CD8-positive, alpha-beta T cell (primary cell): ENCODE measurements at regions of chr3 and their contacts with region 1.

Region 1: GRCh38 chr3:151227807-151228665 is 25.0 kb upstream of the GPR171 start:
- DNase-seq: peak; percentile 61 to 88 (median 79)
- ATAC-seq: peak; percentile 83
- H3K4me3 ChIP-seq: no peak overlapping the region
- H3K4me3 Mint-ChIP-seq: no peak overlapping the region
- H3K27ac ChIP-seq: no peak overlapping the region
- H3K27ac Mint-ChIP-seq: peak overlapping the region; percentile 4
- H3K4me1 ChIP-seq: peaks cover 16% of the 10 kb centered on the region
- H3K4me1 Mint-ChIP-seq: peaks cover 48% of the 10 kb centered on the region
- H3K27me3 ChIP-seq: no peaks in the 10 kb centered on the region
- H3K27me3 Mint-ChIP-seq: no peaks in the 10 kb centered on the region
- CTCF ChIP-seq: peak; percentile 92

Region 2: GRCh38 chr3:151183265-151183671 is 44.8 kb before region 1 on chr3:
- CTCF ChIA-PET with region 1: interaction called, 4 read pairs
- POLR2A ChIA-PET with region 1: no interaction called
- intact Hi-C with region 1: loop called in 1 of 2 experiments (anchors 2 kb)
- DNase-seq: peak in 2 of 9 experiments; percentile 25 to 47
- ATAC-seq: peak; percentile 76
- H3K4me3 ChIP-seq: peak overlapping the region in 1 of 2 experiments; percentile 0
- H3K4me3 Mint-ChIP-seq: peak overlapping the region; percentile 68
- H3K27ac ChIP-seq: peak overlapping the region in 1 of 2 experiments; percentile 2
- H3K27ac Mint-ChIP-seq: peak overlapping the region; percentile 77
- H3K4me1 ChIP-seq: peaks cover 14% of the 10 kb centered on the region
- H3K4me1 Mint-ChIP-seq: peaks cover 39% of the 10 kb centered on the region
- H3K27me3 ChIP-seq: no peaks in the 10 kb centered on the region
- H3K27me3 Mint-ChIP-seq: no peaks in the 10 kb centered on the region
- CTCF ChIP-seq: no peak

Region 3: GRCh38 chr3:151216641-151217607 is 11.1 kb before region 1 on chr3:
- CTCF ChIA-PET with region 1: interaction called, 24 read pairs
- POLR2A ChIA-PET with region 1: no interaction called
- intact Hi-C with region 1: no loop called
- DNase-seq: no peak
- ATAC-seq: no peak
- H3K4me3 ChIP-seq: no peak overlapping the region
- H3K4me3 Mint-ChIP-seq: no peak overlapping the region
- H3K27ac ChIP-seq: no peak overlapping the region
- H3K27ac Mint-ChIP-seq: no peak overlapping the region
- H3K4me1 ChIP-seq: no peaks in the 10 kb centered on the region
- H3K4me1 Mint-ChIP-seq: no peaks in the 10 kb centered on the region
- H3K27me3 ChIP-seq: no peaks in the 10 kb centered on the region
- H3K27me3 Mint-ChIP-seq: no peaks in the 10 kb centered on the region
- CTCF ChIP-seq: no peak

Region 4: DNA sequence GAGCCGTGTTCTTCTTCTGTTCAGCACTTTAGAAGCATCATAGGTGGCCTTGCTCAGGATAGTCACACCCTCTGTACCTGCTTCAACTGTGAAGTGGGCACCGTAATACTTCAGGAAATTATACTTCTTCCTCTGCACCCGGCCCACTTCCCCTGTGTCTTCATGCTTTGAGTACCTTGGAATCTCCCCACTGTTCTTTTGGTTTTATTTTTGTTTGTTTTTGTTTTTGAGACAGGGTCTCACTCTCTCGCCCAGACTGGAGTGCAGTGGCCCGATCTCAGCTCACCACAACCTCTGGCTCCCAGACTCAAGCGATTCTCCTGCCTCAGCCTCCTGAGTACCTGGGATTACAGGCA is 48.6 kb after region 1 on chr3:
- CTCF ChIA-PET with region 1: interaction called, 226 read pairs
- POLR2A ChIA-PET with region 1: interaction called, 5 read pairs
- intact Hi-C with region 1: loop called in 1 of 2 experiments (anchors 1 kb)
- DNase-seq: peak in 6 of 9 experiments; percentile 14 to 74 (median 52)
- ATAC-seq: peak; percentile 88
- H3K4me3 ChIP-seq: no peak overlapping the region
- H3K4me3 Mint-ChIP-seq: peak overlapping the region; percentile 62
- H3K27ac ChIP-seq: peak overlapping the region in 1 of 2 experiments; percentile 37
- H3K27ac Mint-ChIP-seq: peak overlapping the region; percentile 97
- H3K4me1 ChIP-seq: peaks cover 30% of the 10 kb centered on the region
- H3K4me1 Mint-ChIP-seq: peaks cover 48% of the 10 kb centered on the region
- H3K27me3 ChIP-seq: no peaks in the 10 kb centered on the region
- H3K27me3 Mint-ChIP-seq: no peaks in the 10 kb centered on the region
- CTCF ChIP-seq: no peak

Region 5: DNA sequence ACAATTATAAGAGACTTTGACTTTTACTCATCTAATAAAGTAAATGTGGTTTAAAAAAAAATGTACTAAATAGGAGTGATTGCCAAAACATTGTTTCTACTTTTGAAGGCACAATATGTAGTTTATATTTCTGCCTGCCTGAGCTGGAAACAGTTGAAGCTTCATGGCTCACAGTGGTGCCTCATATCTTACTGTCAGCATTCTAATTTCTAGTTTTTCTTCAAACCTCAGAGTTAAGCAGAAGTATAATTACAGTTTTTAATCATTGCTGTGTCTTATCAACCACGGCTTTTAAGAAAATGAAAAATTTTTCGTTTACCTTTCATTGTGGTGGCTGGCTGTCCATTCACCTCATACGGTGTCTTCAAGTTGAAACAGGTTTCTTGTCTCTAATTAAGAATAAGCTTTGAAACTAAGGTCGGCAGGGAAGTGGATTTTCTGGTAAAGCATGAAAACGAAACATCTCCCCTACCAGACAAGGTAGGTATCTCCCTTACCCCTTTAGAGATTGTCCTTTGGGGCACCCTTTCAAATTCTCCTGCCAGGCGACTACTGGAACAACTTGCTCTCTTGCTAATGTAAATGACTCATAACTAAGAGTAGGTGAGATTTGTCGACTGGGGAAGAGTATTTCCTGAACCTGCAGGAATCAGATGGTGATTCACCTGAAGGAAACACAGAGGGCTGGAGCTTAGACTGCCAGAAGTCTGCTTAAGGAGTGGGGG is 88.4 kb after region 1 on chr3 and contains the start of gene GPR87:
- CTCF ChIA-PET with region 1: no interaction called
- POLR2A ChIA-PET with region 1: no interaction called
- intact Hi-C with region 1: no loop called
- DNase-seq: no peak
- ATAC-seq: no peak
- H3K4me3 ChIP-seq: no peak within 1 kb of the TSS
- H3K4me3 Mint-ChIP-seq: no peak within 1 kb of the TSS
- H3K27ac ChIP-seq: no peak within 1 kb of the TSS
- H3K27ac Mint-ChIP-seq: no peak within 1 kb of the TSS
- H3K4me1 ChIP-seq: no peaks in the 10 kb centered on the region
- H3K4me1 Mint-ChIP-seq: no peaks in the 10 kb centered on the region
- H3K27me3 ChIP-seq: no peaks in the 10 kb centered on the region
- H3K27me3 Mint-ChIP-seq: no peaks in the 10 kb centered on the region
- CTCF ChIP-seq: no peak
- total RNA-seq, gene GPR87: not detected

Region 6: GRCh38 chr3:151439652-151440129 is 211.7 kb after region 1 on chr3:
- CTCF ChIA-PET with region 1: no interaction called
- POLR2A ChIA-PET with region 1: no interaction called
- intact Hi-C with region 1: loop called in 1 of 2 experiments (anchors 5 kb)
- DNase-seq: peak in 2 of 9 experiments; percentile 43 to 52
- ATAC-seq: no peak
- H3K4me3 ChIP-seq: no peak overlapping the region
- H3K4me3 Mint-ChIP-seq: no peak overlapping the region
- H3K27ac ChIP-seq: no peak overlapping the region
- H3K27ac Mint-ChIP-seq: no peak overlapping the region
- H3K4me1 ChIP-seq: no peaks in the 10 kb centered on the region
- H3K4me1 Mint-ChIP-seq: no peaks in the 10 kb centered on the region
- H3K27me3 ChIP-seq: peaks cover 0 to 4% of the 10 kb centered on the region in 2 experiments
- H3K27me3 Mint-ChIP-seq: peaks cover 5% of the 10 kb centered on the region
- CTCF ChIP-seq: peak; percentile 62

Region 7: GRCh38 chr3:151770956-151771355 is 542.9 kb after region 1 on chr3:
- CTCF ChIA-PET with region 1: no interaction called
- POLR2A ChIA-PET with region 1: no interaction called
- intact Hi-C with region 1: no loop called
- DNase-seq: no peak
- ATAC-seq: no peak
- H3K4me3 ChIP-seq: no peak overlapping the region
- H3K4me3 Mint-ChIP-seq: no peak overlapping the region
- H3K27ac ChIP-seq: no peak overlapping the region
- H3K27ac Mint-ChIP-seq: no peak overlapping the region
- H3K4me1 ChIP-seq: no peaks in the 10 kb centered on the region
- H3K4me1 Mint-ChIP-seq: no peaks in the 10 kb centered on the region
- H3K27me3 ChIP-seq: no peaks in the 10 kb centered on the region
- H3K27me3 Mint-ChIP-seq: peaks cover 4% of the 10 kb centered on the region
- CTCF ChIP-seq: no peak